Naive thymus-derived CD4-positive, alpha-beta T cell (primary cell): ENCODE measurements at regions of chr12 and their contacts with region 1.

Region 1: GRCh38 chr12:54359033-54359761 is 5.1 kb downstream of the GPR84 start:
- DNase-seq: peak; percentile 68 to 98 (median 94)
- ATAC-seq: peak; percentile 95
- H3K4me3 ChIP-seq: peak overlapping the region; percentile 88
- H3K4me3 Mint-ChIP-seq: no peak overlapping the region
- H3K27ac ChIP-seq: peak overlapping the region; percentile 85
- H3K27ac Mint-ChIP-seq: no peak overlapping the region
- H3K4me1 ChIP-seq: peaks cover 5 to 18% of the 10 kb centered on the region in 2 donors
- H3K4me1 Mint-ChIP-seq: peaks cover 11 to 29% (median 19%) of the 10 kb centered on the region in 7 donors
- H3K27me3 ChIP-seq: no peaks in the 10 kb centered on the region
- H3K27me3 Mint-ChIP-seq: no peaks in the 10 kb centered on the region

Region 2: GRCh38 chr12:54005853-54006686 is 353.1 kb before region 1 on chr12:
- CTCF ChIA-PET with region 1: no interaction called
- POLR2A ChIA-PET with region 1: no interaction called
- intact Hi-C with region 1: loop called in 1 of 2 experiments (anchors 1 kb)
- DNase-seq: peak; percentile 67 to 89 (median 79)
- ATAC-seq: peak; percentile 90
- H3K4me3 ChIP-seq: peak overlapping the region; percentile 45
- H3K4me3 Mint-ChIP-seq: peak overlapping the region; percentile 79 to 91 (median 84)
- H3K27ac ChIP-seq: no peak overlapping the region
- H3K27ac Mint-ChIP-seq: peak overlapping the region in 1 of 9 donors; percentile 6
- H3K4me1 ChIP-seq: peaks cover 6 to 21% of the 10 kb centered on the region in 2 donors
- H3K4me1 Mint-ChIP-seq: peaks cover 9 to 54% (median 24%) of the 10 kb centered on the region in 7 donors
- H3K27me3 ChIP-seq: peaks cover 24 to 77% of the 10 kb centered on the region in 2 donors
- H3K27me3 Mint-ChIP-seq: peaks cover 90 to 97% (median 92%) of the 10 kb centered on the region in 5 donors

Region 3: DNA sequence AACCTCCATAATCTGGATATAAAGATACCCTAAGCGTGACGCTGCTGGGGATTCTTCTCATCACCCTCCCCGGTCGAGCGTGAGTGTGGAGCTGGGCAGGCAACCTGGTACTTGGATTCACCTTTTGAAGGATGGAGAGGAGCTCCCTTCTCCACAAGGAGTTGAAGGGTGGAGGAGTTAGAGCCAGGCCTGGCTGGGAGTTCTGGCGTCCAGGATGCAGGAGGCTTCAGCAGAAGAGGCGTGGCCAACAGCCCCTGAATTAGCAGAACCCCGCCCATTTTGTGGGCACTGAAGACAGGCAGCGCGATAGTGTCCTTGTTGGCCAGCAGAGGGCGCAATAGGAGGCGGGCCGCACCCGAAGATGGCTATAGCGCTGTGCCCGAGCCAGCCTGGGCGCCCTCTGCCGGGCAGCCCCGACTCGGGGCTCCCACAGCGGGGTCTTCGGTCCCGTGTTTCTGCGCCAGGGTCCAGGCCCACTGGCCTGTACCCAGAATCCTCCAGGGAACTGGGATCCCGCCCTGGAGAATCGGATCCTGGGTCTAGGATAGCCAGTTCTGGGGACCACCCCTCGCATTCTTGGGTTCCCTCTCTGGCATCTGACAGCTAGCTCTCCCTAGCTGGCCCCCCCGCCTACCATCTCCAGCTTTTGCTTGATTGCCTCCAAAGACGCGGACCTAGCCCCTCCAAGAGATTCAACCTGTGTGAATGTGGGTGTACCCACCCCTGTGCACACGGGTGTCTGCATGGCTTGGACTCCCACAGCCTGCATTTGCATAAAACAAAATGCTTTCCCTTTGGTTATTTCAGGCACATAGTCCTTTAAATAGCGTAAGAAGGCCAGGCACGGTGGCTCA is 144.4 kb before region 1 on chr12:
- CTCF ChIA-PET with region 1: interaction called, 8 read pairs
- POLR2A ChIA-PET with region 1: interaction called, 3 read pairs
- intact Hi-C with region 1: loop called in 1 of 2 experiments (anchors 1 kb)
- DNase-seq: peak; percentile 80 to 90 (median 89)
- ATAC-seq: peak; percentile 95
- H3K4me3 ChIP-seq: peak overlapping the region; percentile 56
- H3K4me3 Mint-ChIP-seq: peak overlapping the region; percentile 72 to 93 (median 82)
- H3K27ac ChIP-seq: no peak overlapping the region
- H3K27ac Mint-ChIP-seq: peak overlapping the region in 2 of 9 donors; percentile 28 to 52
- H3K4me1 ChIP-seq: peaks cover 25 to 35% of the 10 kb centered on the region in 2 donors
- H3K4me1 Mint-ChIP-seq: peaks cover 18 to 52% (median 31%) of the 10 kb centered on the region in 7 donors
- H3K27me3 ChIP-seq: no peaks in the 10 kb centered on the region
- H3K27me3 Mint-ChIP-seq: peaks cover 0 to 40% (median 5%) of the 10 kb centered on the region in 5 donors

Region 4: GRCh38 chr12:54251667-54252284 is 107.4 kb before region 1 on chr12:
- CTCF ChIA-PET with region 1: interaction called, 8 read pairs
- POLR2A ChIA-PET with region 1: interaction called, 5 read pairs
- intact Hi-C with region 1: loop called (anchors 1 to 2 kb)
- DNase-seq: peak in 7 of 9 donors; percentile 9 to 54 (median 47)
- ATAC-seq: peak; percentile 75
- H3K4me3 ChIP-seq: no peak overlapping the region
- H3K4me3 Mint-ChIP-seq: peak overlapping the region in 1 of 10 donors; percentile 18
- H3K27ac ChIP-seq: no peak overlapping the region
- H3K27ac Mint-ChIP-seq: peak overlapping the region in 2 of 9 donors; percentile 48 to 76
- H3K4me1 ChIP-seq: no peaks in the 10 kb centered on the region
- H3K4me1 Mint-ChIP-seq: peaks cover 7 to 23% (median 17%) of the 10 kb centered on the region in 7 donors
- H3K27me3 ChIP-seq: no peaks in the 10 kb centered on the region
- H3K27me3 Mint-ChIP-seq: no peaks in the 10 kb centered on the region

Region 5: DNA sequence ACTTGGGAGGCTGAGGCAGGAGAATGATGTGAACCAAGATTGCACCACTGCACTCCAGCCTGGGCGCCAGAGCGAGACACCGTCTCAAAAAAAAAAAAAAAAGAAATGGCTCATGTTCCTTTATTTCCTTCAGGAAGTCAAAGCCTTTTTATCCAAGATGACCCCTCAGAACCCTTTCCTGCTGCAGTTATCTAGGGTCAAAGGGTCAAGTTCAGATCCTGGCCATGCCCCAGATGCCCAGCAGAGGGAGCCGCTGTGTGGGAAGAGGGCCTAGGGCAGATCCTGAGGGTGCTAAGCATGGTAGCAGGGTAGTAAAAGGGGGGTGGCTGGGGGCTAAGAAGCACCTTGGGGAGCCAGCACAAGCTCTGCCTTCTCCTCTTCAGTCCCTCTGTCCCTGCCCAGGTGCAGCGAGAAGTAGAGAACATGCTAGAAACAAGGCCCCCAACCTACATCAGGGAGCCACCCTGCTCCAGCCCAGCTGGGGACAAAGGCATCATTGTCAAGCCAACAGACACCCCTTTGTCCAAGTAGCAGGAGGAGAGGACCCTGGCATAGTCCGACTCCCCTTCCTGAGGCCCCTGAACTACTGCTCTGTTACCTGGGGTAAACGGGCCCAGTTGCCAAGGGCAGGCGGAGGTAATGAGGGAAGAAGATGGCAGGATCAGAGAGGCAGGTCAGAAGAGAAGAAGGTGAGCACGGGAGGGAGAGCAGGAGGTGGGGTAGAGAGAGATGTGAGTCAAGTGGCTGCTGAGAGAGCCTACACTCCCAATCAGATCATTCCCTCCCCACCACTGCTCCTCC is 64.8 kb before region 1 on chr12:
- CTCF ChIA-PET with region 1: interaction called, 41 read pairs
- POLR2A ChIA-PET with region 1: interaction called, 8 read pairs
- intact Hi-C with region 1: loop called (anchors 1 kb)
- DNase-seq: peak in 8 of 9 donors; percentile 22 to 70 (median 44)
- ATAC-seq: peak; percentile 76
- H3K4me3 ChIP-seq: no peak overlapping the region
- H3K4me3 Mint-ChIP-seq: no peak overlapping the region
- H3K27ac ChIP-seq: no peak overlapping the region
- H3K27ac Mint-ChIP-seq: no peak overlapping the region
- H3K4me1 ChIP-seq: no peaks in the 10 kb centered on the region
- H3K4me1 Mint-ChIP-seq: peaks cover 5 to 22% (median 6%) of the 10 kb centered on the region in 7 donors
- H3K27me3 ChIP-seq: no peaks in the 10 kb centered on the region
- H3K27me3 Mint-ChIP-seq: peaks cover 0 to 20% (median 5%) of the 10 kb centered on the region in 5 donors

Region 6: GRCh38 chr12:54337280-54337842 is 21.8 kb before region 1 on chr12:
- CTCF ChIA-PET with region 1: interaction called, 3 read pairs
- POLR2A ChIA-PET with region 1: interaction called, 32 read pairs
- intact Hi-C with region 1: loop called in 1 of 2 experiments (anchors 1 kb)
- DNase-seq: no peak
- ATAC-seq: no peak
- H3K4me3 ChIP-seq: no peak overlapping the region
- H3K4me3 Mint-ChIP-seq: no peak overlapping the region
- H3K27ac ChIP-seq: no peak overlapping the region
- H3K27ac Mint-ChIP-seq: peak overlapping the region in 2 of 9 donors; percentile 19 to 25
- H3K4me1 ChIP-seq: peaks cover 4 to 13% of the 10 kb centered on the region in 2 donors
- H3K4me1 Mint-ChIP-seq: peaks cover 7 to 66% (median 32%) of the 10 kb centered on the region in 7 donors
- H3K27me3 ChIP-seq: no peaks in the 10 kb centered on the region
- H3K27me3 Mint-ChIP-seq: no peaks in the 10 kb centered on the region

Region 7: GRCh38 chr12:54497883-54498282 is 138.7 kb after region 1 on chr12:
- CTCF ChIA-PET with region 1: no interaction called
- POLR2A ChIA-PET with region 1: no interaction called
- intact Hi-C with region 1: loop called in 1 of 2 experiments (anchors 1 kb)
- DNase-seq: no peak
- ATAC-seq: peak; percentile 3
- H3K4me3 ChIP-seq: peak overlapping the region; percentile 89
- H3K4me3 Mint-ChIP-seq: peak overlapping the region; percentile 97 to 99 (median 98)
- H3K27ac ChIP-seq: peak overlapping the region; percentile 77
- H3K27ac Mint-ChIP-seq: peak overlapping the region; percentile 88 to 98 (median 96)
- H3K4me1 ChIP-seq: peaks cover 19 to 31% of the 10 kb centered on the region in 2 donors
- H3K4me1 Mint-ChIP-seq: peaks cover 30 to 58% (median 41%) of the 10 kb centered on the region in 7 donors
- H3K27me3 ChIP-seq: no peaks in the 10 kb centered on the region
- H3K27me3 Mint-ChIP-seq: no peaks in the 10 kb centered on the region